T-cell (primary cell): ENCODE measurements at regions of chr1 and their contacts with region 1.

Region 1: GRCh38 chr1:234827181-234827580 is 217.2 kb upstream of the IRF2BP2 start:
- DNase-seq: no peak
- ATAC-seq: no peak
- H3K4me3 ChIP-seq: no peak overlapping the region
- H3K4me3 Mint-ChIP-seq: no peak overlapping the region
- H3K27ac ChIP-seq: no peak overlapping the region
- H3K27ac Mint-ChIP-seq: no peak overlapping the region
- H3K4me1 ChIP-seq: peaks cover 0 to 3% of the 10 kb centered on the region in 2 experiments
- H3K4me1 Mint-ChIP-seq: peaks cover 5 to 27% (median 7%) of the 10 kb centered on the region in 3 donors
- H3K27me3 ChIP-seq: peaks cover 0 to 9% of the 10 kb centered on the region in 2 experiments
- H3K27me3 Mint-ChIP-seq: peaks cover 0 to 1% of the 10 kb centered on the region in 2 donors

Region 2: GRCh38 chr1:234907940-234908405 is 80.8 kb after region 1 on chr1:
- CTCF ChIA-PET with region 1: interaction called in 1 of 2 experiments, 12 read pairs
- POLR2A ChIA-PET with region 1: no interaction called
- DNase-seq: no peak
- ATAC-seq: no peak
- H3K4me3 ChIP-seq: no peak overlapping the region
- H3K4me3 Mint-ChIP-seq: no peak overlapping the region
- H3K27ac ChIP-seq: no peak overlapping the region
- H3K27ac Mint-ChIP-seq: no peak overlapping the region
- H3K4me1 ChIP-seq: peaks cover 10 to 20% of the 10 kb centered on the region in 2 experiments
- H3K4me1 Mint-ChIP-seq: peaks cover 26 to 27% (median 27%) of the 10 kb centered on the region in 3 donors
- H3K27me3 ChIP-seq: no peaks in the 10 kb centered on the region
- H3K27me3 Mint-ChIP-seq: no peaks in the 10 kb centered on the region